ENCODE measurements at regions of chr22 and their contacts with region 1.

Region 1: GRCh38 chr22:17158568-17159503 is at the start of gene HDHD5:
- DNase-seq: peak; percentile 90
- H3K4me3 Mint-ChIP-seq: peak within 1 kb of the TSS; percentile 84
- H3K27ac Mint-ChIP-seq: peak within 1 kb of the TSS; percentile 78
- H3K4me1 Mint-ChIP-seq: peaks cover 38% of the 10 kb centered on the region
- H3K27me3 Mint-ChIP-seq: no peaks in the 10 kb centered on the region
- total RNA-seq, gene HDHD5: 40.1 to 43.7 TPM

Region 2: DNA sequence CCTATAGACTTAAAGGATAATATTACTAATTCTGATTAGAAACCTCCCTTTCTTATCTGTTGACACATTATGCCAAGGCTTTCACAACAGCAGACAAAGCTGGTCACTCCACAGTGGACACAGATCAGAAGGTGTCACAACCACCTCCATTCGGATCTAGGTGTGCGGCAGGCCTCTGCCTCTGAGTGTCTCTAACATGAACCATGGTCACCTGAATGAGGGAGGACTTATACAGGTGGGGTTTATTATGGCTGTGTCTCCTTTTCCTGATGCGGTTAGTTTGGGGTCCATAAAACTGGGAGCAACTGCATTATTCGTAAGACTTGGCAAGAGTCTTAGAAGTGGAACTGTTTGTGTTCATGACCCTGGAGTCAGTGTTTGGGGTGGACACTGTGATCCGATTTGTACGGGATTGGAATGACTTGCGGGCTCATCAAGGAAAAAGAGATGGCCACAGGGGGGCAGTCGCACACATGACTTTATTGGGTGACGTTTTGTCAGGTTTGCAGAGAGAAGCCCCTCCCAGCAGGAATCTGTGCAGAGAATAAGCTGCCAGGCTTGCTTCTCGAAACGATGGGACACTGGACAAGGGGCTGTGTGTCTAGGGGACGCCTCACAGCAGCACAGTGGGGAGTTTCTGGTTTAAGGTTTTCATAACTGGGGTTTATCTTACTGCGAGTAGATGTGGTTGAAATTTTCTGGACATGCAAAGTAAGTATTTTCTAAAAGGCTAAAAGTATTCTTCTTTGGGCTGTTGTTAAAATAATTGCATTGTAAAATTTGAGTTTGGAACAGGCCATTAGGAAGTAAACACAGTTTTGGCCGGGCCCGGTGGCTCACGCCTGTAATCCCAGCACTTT is 241.5 kb before region 1 on chr22:
- CTCF ChIA-PET with region 1: no interaction called
- intact Hi-C with region 1: loop called (anchors 5 kb)
- DNase-seq: peak; percentile 81
- H3K4me3 Mint-ChIP-seq: no peak overlapping the region
- H3K27ac Mint-ChIP-seq: no peak overlapping the region
- H3K4me1 Mint-ChIP-seq: no peaks in the 10 kb centered on the region
- H3K27me3 Mint-ChIP-seq: peaks cover 18% of the 10 kb centered on the region

Region 3: GRCh38 chr22:17077255-17077654 is 81.6 kb before region 1 on chr22:
- CTCF ChIA-PET with region 1: interaction called, 4 read pairs
- intact Hi-C with region 1: loop called (anchors 1 kb)
- DNase-seq: no peak
- H3K4me3 Mint-ChIP-seq: no peak overlapping the region
- H3K27ac Mint-ChIP-seq: no peak overlapping the region
- H3K4me1 Mint-ChIP-seq: peaks cover 20% of the 10 kb centered on the region
- H3K27me3 Mint-ChIP-seq: no peaks in the 10 kb centered on the region

Region 4: DNA sequence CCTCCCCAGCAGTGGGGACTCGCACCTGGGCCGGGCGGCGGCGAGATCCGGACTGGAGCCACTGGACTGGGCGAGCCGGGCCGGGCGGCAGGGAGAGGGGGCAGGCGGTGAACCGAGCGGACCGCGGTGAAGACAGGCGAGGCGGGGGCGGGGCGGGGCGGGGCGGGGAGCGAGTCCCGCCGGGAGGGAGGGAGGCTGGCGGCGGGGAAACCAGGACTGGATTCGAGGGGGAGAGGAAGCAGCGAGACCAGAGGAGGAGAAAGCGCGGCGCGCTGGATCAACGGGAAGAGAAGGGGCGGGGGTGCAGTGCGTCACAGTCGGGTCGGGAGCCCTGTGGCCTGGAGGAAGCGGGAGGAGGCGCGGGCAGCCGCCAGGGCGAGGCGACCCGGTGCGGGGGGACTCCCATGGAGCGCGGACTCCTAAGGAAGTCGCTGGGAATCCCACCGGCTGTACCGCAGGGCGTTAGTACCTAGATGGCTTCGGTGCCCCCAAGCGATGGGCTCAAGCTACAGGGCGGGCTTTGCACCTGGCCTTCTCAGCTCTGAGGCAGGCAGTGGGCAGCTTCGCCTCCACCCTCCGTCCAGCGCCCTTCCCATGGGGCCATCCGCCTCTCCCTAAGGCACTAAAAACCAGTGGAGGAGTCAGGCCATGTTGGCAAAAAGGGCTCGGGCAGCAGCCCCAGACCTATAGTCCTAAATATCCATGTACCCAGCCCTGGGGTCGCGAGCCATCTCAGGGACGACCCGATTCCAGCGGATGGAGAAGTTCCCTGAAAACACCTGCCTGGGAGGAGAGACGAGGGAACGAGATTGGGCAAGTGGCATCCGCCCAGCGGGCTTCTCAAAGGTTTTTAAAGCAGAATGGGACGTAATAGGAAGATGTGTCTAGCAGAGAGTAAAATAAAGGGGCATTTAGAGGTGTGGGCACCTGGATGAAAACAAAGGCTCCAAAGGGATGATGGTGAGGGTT is 37.3 kb before region 1 on chr22 and contains the start of gene TMEM121B:
- CTCF ChIA-PET with region 1: interaction called, 4 read pairs
- intact Hi-C with region 1: loop called (anchors 2 kb)
- DNase-seq: peak; percentile 54
- H3K4me3 Mint-ChIP-seq: peak within 1 kb of the TSS; percentile 62
- H3K27ac Mint-ChIP-seq: no peak within 1 kb of the TSS
- H3K4me1 Mint-ChIP-seq: peaks cover 38% of the 10 kb centered on the region
- H3K27me3 Mint-ChIP-seq: peaks cover 11% of the 10 kb centered on the region
- total RNA-seq, gene TMEM121B: 0.19 to 0.22 TPM

Region 5: DNA sequence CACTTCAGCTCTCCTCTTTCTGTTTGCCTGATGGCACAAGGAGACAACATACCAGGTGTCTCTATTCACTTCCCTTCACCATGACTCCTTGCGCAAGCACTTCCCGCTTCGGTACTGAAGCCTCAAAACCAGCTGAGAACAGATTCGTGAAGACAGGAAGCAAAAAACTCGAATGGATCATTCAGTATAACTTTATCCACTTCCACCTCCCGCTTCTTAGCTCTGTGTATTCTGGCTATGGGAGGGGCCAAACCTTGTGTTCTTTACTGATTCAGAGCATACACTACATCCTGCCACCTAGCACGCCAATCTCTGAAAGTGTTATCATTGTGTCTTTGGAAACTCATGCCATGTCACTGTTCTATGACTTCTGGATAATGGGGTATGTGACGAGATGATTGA is 122.6 kb after region 1 on chr22:
- CTCF ChIA-PET with region 1: no interaction called
- intact Hi-C with region 1: loop called (anchors 2 kb)
- DNase-seq: peak; percentile 71
- H3K4me3 Mint-ChIP-seq: peak overlapping the region; percentile 38
- H3K27ac Mint-ChIP-seq: peak overlapping the region; percentile 79
- H3K4me1 Mint-ChIP-seq: peaks cover 15% of the 10 kb centered on the region
- H3K27me3 Mint-ChIP-seq: no peaks in the 10 kb centered on the region

Region 6: DNA sequence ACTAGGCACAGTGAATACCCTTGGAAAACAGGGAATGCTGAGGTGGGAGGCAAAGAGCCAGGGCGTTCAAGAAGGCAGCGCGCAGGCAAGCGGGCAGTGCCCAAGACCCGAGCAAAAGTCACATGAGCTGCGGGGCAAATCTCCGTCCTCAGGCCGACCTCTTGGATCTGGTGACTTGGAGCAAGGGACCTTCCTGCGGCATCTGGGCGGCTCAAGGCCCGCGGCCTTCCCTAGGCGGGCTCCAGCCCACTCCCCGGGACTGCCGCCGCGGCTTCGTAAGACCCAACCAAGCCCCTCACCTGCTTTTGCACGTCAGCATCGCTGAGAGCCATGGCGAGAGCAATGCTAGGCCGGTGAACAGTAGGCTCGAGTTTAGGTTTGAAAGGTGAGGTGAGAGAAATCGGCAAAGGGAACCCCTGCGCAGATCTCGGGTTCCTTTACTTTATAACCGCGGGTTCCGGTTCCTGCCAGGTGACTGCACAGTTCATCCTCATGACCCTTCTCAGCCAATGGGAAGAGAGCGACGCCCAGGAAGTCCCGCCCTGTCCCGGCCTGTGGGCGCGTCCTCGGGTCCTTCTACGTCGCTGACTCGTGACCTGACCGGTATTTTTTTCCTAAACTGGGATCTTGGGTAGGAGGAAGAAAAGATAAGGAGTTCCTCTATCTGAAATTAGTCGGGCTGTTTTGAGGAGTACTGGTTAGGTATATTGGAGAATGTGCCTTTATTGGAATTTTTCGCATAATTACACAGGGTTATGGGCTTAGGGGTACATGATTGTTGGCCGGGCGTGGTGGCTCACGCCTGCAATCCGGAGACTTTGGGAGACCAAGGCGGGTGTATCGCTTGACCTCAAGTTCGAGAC is 469.7 kb after region 1 on chr22 and contains the start of gene ATP6V1E1:
- CTCF ChIA-PET with region 1: no interaction called
- intact Hi-C with region 1: loop called (anchors 2 kb)
- DNase-seq: peak; percentile 98
- H3K4me3 Mint-ChIP-seq: peak within 1 kb of the TSS; percentile 98
- H3K27ac Mint-ChIP-seq: peak within 1 kb of the TSS; percentile 92
- H3K4me1 Mint-ChIP-seq: peaks cover 26% of the 10 kb centered on the region
- H3K27me3 Mint-ChIP-seq: no peaks in the 10 kb centered on the region
- total RNA-seq, gene ATP6V1E1: 74.5 to 75.5 TPM